ENCODE measurements at regions of chr16 and their contacts with region 1.

Region 1: GRCh38 chr16:20956319-20956718 is 55.7 kb downstream of the LYRM1 start:
- DNase-seq: no peak
- ATAC-seq: no peak
- H3K4me3 ChIP-seq: no peak overlapping the region
- H3K4me3 Mint-ChIP-seq: no peak overlapping the region
- H3K27ac ChIP-seq: no peak overlapping the region
- H3K27ac Mint-ChIP-seq: no peak overlapping the region
- H3K4me1 ChIP-seq: no peaks in the 10 kb centered on the region
- H3K4me1 Mint-ChIP-seq: no peaks in the 10 kb centered on the region
- H3K27me3 ChIP-seq: peaks cover 0 to 2% (median 0%) of the 10 kb centered on the region in 4 experiments
- H3K27me3 Mint-ChIP-seq: peaks cover 7% of the 10 kb centered on the region
- CTCF ChIP-seq: no peak

Region 2: DNA sequence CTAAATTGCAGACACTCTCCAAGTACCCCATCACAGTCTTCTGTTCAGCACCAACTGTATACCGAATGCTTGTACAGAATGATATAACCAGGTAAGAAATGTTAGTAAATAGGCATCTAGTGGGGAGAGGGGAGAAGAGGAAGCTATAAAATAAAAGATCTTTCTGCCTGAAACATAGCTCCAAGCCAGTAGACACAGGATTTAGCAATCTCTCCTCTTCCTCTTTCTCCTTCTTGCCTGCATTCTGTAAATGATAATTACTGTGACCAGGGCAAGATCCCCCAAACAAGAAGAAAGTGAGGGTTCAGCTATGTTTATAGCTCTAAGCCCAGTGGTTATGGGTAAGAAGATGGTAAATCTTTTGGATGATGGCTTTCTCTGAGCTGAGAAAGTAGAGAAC is 174.6 kb before region 1 on chr16:
- CTCF ChIA-PET with region 1: no interaction called
- POLR2A ChIA-PET with region 1: interaction called, 12 read pairs
- intact Hi-C with region 1: no loop called
- DNase-seq: no peak
- ATAC-seq: no peak
- H3K4me3 ChIP-seq: no peak overlapping the region
- H3K4me3 Mint-ChIP-seq: no peak overlapping the region
- H3K27ac ChIP-seq: no peak overlapping the region
- H3K27ac Mint-ChIP-seq: no peak overlapping the region
- H3K4me1 ChIP-seq: no peaks in the 10 kb centered on the region
- H3K4me1 Mint-ChIP-seq: no peaks in the 10 kb centered on the region
- H3K27me3 ChIP-seq: no peaks in the 10 kb centered on the region
- H3K27me3 Mint-ChIP-seq: no peaks in the 10 kb centered on the region
- CTCF ChIP-seq: no peak

Measured in B cell (primary cell).